ENCODE measurements at regions of chr20 and their contacts with region 1.

Region 1: GRCh38 chr20:47677635-47678453 is 107.4 kb downstream of the SULF2 start:
- DNase-seq: peak; percentile 61
- ATAC-seq: peak; percentile 71
- H3K4me3 Mint-ChIP-seq: no peak overlapping the region
- H3K27ac Mint-ChIP-seq: no peak overlapping the region
- H3K4me1 Mint-ChIP-seq: no peaks in the 10 kb centered on the region
- H3K27me3 Mint-ChIP-seq: no peaks in the 10 kb centered on the region
- CTCF ChIP-seq: no peak

Region 2: DNA sequence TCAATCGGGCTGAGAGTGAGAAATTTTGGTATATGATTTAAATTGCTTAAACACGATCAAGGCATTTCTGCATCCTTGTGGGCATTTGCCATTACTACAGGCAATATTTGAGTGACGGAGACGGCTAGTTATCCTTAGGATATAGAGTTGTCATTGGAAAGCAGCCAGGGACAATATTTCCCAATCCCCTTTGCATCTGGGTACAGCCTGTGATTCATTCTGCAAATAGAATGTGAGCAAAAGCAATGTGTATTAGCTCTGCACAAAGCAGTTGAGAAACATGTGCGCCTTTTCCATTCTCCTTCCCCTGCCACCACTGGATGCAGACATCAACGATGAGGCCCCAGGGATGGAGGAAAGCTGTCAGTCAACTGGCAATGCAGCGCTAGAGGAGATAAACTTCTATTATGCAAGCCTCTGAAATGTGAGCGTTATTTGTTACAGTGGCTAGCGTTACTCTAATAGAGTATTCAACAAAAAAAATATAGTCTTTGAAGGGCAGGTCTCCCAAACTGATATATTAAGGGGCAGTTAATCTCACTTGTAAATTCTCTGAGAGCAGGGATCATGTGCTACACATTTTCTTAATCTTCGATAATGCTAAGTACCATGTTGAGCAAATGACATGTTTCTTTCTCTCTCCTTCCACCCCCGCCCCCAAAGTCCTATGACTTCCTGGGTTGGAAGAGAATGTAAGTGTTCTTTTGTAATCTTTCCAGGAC is 213.3 kb before region 1 on chr20:
- CTCF ChIA-PET with region 1: no interaction called
- POLR2A ChIA-PET with region 1: no interaction called
- intact Hi-C with region 1: no loop called
- DNase-seq: no peak
- ATAC-seq: no peak
- H3K4me3 Mint-ChIP-seq: no peak overlapping the region
- H3K27ac Mint-ChIP-seq: peak overlapping the region; percentile 50
- H3K4me1 Mint-ChIP-seq: peaks cover 37% of the 10 kb centered on the region
- H3K27me3 Mint-ChIP-seq: no peaks in the 10 kb centered on the region
- CTCF ChIP-seq: no peak

Region 3: DNA sequence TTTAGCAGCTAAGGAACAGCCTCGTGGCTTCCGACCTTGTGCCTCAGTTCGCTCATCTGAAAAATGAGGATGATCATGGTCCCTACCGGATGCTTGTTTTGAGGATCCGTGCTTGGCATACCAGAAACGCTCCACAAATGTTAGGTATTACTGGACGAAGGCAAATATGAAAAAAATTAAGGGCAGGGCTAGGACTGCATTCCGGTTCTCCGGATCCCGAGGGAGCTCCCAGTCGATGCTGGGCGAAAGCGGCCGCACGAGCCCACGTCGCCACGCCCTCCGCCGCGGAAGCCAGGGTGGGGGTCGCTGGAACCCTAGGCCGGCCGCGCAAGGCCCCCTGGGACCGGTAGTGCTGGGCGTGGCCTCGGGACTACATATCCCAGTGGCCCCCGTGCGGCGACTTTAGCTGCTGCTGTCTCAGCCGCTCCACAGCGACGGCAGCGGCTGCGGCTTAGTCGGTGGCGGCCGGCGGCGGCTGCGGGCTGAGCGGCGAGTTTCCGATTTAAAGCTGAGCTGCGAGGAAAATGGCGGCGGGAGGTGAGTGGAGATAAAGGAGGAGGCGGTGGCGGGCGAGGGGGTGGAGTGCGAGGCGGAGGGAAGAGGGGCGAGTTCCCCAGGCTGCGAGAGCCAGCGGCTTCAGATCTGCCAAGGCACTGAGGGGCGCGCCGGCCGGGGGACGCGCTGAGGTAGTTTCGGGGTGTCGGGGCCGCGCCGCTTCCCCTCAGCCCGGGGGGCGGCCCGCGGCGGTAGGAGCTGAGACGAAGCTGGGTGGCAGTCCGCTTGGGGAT is 176.2 kb before region 1 on chr20 and contains the start of gene NCOA3:
- CTCF ChIA-PET with region 1: no interaction called
- POLR2A ChIA-PET with region 1: no interaction called
- intact Hi-C with region 1: no loop called
- DNase-seq: peak; percentile 89
- ATAC-seq: peak; percentile 89
- H3K4me3 Mint-ChIP-seq: peak within 1 kb of the TSS; percentile 100
- H3K27ac Mint-ChIP-seq: peak within 1 kb of the TSS; percentile 98
- H3K4me1 Mint-ChIP-seq: peaks cover 59% of the 10 kb centered on the region
- H3K27me3 Mint-ChIP-seq: no peaks in the 10 kb centered on the region
- CTCF ChIP-seq: no peak
- total RNA-seq, gene NCOA3: 186 and 187 TPM in 2 replicates

Region 4: GRCh38 chr20:47767972-47768794 is 90.3 kb after region 1 on chr20:
- CTCF ChIA-PET with region 1: no interaction called
- POLR2A ChIA-PET with region 1: no interaction called
- intact Hi-C with region 1: no loop called
- DNase-seq: no peak
- ATAC-seq: no peak
- H3K4me3 Mint-ChIP-seq: no peak overlapping the region
- H3K27ac Mint-ChIP-seq: no peak overlapping the region
- H3K4me1 Mint-ChIP-seq: no peaks in the 10 kb centered on the region
- H3K27me3 Mint-ChIP-seq: peaks cover 23% of the 10 kb centered on the region
- CTCF ChIP-seq: no peak

Region 5: DNA sequence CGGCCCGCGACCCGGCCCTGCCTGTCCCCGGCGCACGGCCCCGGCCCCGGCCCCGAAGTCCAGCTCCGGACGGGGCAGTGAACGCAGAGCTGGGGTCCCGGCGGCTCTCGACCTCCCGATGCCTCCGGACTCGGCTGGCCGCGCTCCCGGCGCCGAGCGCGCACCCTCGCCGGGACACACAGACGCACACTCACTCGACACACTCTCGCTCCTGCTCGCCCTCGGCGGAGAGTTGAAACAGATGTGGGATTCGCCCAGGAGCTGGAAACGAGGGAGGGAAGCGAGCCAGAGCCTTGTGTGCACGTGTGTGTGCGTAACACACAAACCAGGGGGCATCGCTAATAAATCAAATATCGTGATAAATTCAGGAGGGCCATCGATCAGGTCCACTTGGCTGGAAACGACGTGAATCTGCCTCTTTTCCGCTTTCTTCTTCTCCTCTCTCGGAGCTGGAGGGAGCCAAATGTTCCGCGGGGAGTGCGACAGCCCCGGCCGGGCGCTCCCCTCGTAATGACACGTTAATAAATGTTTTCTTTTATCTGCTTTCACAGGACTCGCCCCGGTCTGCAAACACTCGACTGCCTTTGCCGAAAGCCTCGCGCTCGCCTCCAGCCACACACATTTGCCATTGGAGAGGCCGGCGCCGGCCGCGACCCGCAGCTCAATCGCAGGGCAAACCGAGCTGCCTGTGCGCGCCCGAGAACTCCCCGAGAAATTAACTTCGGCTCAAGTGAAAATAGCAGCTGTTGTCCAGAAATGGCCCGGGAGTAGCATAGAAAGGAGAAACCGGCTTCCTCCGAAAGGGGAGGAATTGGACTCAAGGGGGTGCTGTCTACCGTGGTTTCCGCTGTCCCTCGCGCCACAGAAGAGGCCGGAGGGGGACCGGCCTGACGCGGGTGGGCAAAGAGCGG is 108.3 kb after region 1 on chr20:
- CTCF ChIA-PET with region 1: no interaction called
- POLR2A ChIA-PET with region 1: no interaction called
- intact Hi-C with region 1: loop called (anchors 1 kb)
- DNase-seq: peak; percentile 38
- ATAC-seq: peak; percentile 49
- H3K4me3 Mint-ChIP-seq: peak overlapping the region; percentile 86
- H3K27ac Mint-ChIP-seq: no peak overlapping the region
- H3K4me1 Mint-ChIP-seq: peaks cover 18% of the 10 kb centered on the region
- H3K27me3 Mint-ChIP-seq: peaks cover 40% of the 10 kb centered on the region
- CTCF ChIP-seq: no peak